HEK293 (cell line): ENCODE measurements at regions of chr12 and their contacts with region 1.

Region 1: GRCh38 chr12:113048716-113049127 is 7.8 kb upstream of the DTX1 start:
- H3K4me3 ChIP-seq: no peak overlapping the region
- H3K27ac ChIP-seq: no peak overlapping the region
- H3K4me1 ChIP-seq: no peaks in the 10 kb centered on the region
- CTCF ChIP-seq: peak; percentile 56; the same call in 1 of the 2 replicates

Region 2: GRCh38 chr12:113065126-113066007 is 16.6 kb after region 1 on chr12:
- CTCF ChIA-PET with region 1: interaction called, 46 read pairs
- POLR2A ChIA-PET with region 1: no interaction called
- H3K4me3 ChIP-seq: no peak overlapping the region
- H3K27ac ChIP-seq: no peak overlapping the region
- H3K4me1 ChIP-seq: no peaks in the 10 kb centered on the region
- CTCF ChIP-seq: no peak

Region 3: DNA sequence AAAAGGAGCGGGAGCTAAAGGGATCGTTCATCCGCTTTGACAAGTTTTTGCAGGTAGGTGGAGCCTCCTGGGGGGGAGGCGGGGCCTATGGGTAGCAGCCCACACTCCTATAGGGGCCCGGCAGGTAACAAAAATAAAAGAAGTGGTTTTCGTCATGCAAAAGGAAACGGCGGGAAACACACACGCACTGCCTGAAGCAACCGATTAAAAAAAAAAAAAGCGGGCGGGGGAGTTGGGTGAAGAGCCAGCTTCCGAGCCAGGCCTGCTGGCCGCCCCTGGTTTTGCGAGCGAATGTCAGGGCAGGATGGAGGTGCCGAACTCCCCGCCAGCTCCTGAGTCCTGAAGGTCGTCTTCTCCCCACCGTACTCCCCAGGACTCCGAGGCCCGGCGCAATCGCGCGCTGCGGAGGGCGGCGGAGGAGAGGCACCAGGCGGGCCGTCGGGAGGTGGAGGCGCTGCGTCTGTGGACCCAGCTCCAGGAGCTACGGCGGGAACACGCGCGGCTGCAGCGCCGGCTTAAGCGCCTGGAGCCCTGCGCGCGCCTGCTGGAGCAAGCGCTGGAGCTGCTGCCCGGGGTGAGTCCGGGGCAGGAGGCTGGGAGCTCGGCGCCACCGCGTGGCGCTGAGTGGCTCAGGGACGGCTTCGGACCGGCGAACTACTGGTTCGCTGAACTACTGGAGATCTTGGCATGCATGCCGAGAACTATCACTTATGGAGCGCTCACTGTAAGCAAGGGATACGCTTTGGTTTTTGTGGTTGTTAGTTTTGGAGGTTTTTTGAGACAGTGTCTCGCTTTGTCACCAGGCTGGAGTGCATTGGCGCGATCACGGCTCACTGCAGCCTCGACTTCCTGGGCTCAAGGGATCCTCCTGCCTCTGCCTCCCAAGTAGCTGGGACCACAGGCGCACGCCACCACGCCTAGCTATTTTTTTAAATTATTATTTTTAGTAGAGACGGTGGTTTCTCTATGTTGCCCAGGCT is 104.4 kb after region 1 on chr12:
- CTCF ChIA-PET with region 1: interaction called, 31 read pairs
- POLR2A ChIA-PET with region 1: no interaction called
- H3K4me3 ChIP-seq: peak overlapping the region; percentile 49
- H3K27ac ChIP-seq: no peak overlapping the region; the same call in 1 of the 2 replicates
- H3K4me1 ChIP-seq: 0 out of 2 replicates have a peak, but pooled peaks cover 3% of the 10 kb centered on the region
- CTCF ChIP-seq: peak; percentile 87

Region 4: DNA sequence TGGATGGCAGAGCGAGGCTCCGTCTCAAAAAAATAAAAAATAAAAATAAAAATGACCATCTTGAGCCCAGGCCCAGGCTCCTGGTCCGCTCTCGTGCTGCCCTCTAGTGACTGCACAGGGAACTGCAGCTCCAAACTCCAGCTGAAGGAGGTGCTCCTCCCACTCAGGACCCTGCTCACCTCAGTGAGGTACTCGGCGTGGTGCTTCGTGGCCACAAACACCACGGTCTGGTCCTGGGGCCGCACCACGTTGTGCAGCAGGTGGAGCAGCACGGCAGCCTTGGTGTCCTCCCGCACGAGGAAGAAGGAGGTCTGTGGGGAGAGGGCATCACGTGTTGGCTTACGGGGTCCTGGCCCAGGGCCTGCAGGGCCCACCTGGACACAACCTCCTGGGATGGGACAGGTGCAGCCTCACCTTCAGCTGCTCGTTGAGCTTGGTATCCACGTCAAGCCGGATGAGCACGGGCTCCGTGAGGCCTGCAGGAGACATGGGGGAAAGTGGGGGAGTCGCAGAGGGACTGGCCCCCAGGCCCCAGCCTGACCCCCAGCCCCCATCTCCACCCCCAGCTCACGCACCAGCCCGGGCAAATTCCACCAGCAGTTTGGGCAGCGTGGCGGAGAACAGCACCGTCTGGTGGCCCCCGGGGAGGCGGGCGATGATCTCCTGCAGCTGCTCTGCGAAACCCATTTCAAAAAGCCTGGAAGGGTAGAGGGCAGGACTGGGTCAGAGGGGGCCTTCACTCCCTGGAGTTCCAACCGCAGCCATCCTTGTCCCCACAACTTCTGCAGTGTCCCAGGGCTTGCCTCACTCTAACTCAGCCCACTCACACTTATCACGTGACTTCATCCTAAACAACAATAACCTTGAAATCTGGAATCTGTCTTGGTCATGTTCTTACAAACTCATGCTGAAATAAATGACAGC is 126.0 kb after region 1 on chr12:
- CTCF ChIA-PET with region 1: interaction called, 34 read pairs
- POLR2A ChIA-PET with region 1: no interaction called
- H3K4me3 ChIP-seq: no peak overlapping the region
- H3K27ac ChIP-seq: no peak overlapping the region
- H3K4me1 ChIP-seq: no peaks in the 10 kb centered on the region
- CTCF ChIP-seq: peak; percentile 83